Activated CD4-positive, alpha-beta T cell treated with anti-CD3 and anti-CD28 coated beads for 36 hours (primary cell): ENCODE measurements at regions of chr1 and their contacts with region 1.

Region 1: GRCh38 chr1:67227196-67227595 is 60.9 kb downstream of the IL23R start:
- DNase-seq: no peak
- ATAC-seq: no peak
- H3K4me3 Mint-ChIP-seq: no peak overlapping the region
- H3K27ac Mint-ChIP-seq: no peak overlapping the region
- H3K4me1 Mint-ChIP-seq: peaks cover 11% of the 10 kb centered on the region
- H3K27me3 Mint-ChIP-seq: no peaks in the 10 kb centered on the region

Region 2: DNA sequence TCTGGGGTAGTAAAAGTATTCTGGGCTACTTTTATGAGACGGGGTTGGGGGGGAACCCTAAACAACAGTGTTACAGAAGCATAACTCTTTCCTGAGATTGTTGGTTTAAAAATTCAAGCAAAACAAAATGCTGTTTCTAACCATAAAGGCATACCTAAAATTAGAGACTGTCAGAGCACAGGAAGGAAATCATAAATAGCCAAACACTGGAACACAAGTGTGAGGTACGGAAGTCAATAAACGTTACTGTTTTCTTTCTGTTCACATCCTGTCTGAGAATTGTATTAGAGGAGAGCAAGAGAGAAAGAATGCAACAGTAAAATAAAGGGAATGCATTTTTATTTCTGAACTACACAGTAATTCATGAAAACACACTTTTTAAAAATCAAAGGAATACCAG is 37.7 kb after region 1 on chr1:
- CTCF ChIA-PET with region 1: no interaction called
- POLR2A ChIA-PET with region 1: no interaction called
- intact Hi-C with region 1: no loop called
- DNase-seq: no peak
- ATAC-seq: peak; percentile 30
- H3K4me3 Mint-ChIP-seq: no peak overlapping the region
- H3K27ac Mint-ChIP-seq: no peak overlapping the region
- H3K4me1 Mint-ChIP-seq: peaks cover 26% of the 10 kb centered on the region
- H3K27me3 Mint-ChIP-seq: peaks cover 2% of the 10 kb centered on the region

Region 3: DNA sequence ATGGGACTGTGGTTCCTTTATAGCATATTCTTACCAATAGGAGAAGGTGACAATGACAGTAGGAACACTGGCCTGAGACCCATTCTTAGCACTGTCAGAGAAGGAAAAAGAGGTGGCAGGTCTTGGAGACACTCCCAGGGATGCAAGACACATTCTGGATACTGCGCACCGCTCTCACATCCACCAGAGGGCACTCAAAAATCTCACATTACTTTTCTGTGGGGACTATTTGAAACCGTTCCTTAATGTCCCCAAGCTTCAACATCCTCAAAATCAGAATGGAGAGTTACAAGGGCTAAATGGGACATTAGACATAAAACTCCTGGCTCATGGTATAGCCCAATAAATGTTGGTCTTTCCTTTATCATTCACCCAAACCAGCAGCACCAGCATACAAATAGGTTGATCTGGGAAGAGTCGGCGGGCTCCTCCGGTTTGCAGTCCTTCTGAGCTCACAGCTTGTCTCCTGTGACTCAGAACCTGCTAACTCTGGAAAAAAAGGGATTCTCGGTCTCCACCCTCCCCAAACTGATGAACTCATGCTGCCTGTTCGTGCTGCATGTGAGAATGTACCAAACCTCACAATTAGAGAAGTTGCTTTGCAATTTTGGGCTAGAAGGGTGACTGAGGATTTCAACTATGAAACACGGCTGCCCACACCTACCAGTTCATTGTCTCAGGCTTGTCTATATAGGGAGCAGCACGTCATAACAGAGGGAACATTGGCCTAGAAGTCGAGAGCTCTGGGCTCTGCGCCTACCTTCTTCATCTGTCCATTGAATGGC is 120.7 kb after region 1 on chr1:
- CTCF ChIA-PET with region 1: no interaction called
- POLR2A ChIA-PET with region 1: no interaction called
- intact Hi-C with region 1: loop called in 1 of 2 experiments (anchors 10 kb)
- DNase-seq: peak; percentile 42
- ATAC-seq: no peak
- H3K4me3 Mint-ChIP-seq: no peak overlapping the region
- H3K27ac Mint-ChIP-seq: no peak overlapping the region
- H3K4me1 Mint-ChIP-seq: peaks cover 38% of the 10 kb centered on the region
- H3K27me3 Mint-ChIP-seq: no peaks in the 10 kb centered on the region

Region 4: GRCh38 chr1:67404212-67404620 is 177.0 kb after region 1 on chr1:
- CTCF ChIA-PET with region 1: no interaction called
- POLR2A ChIA-PET with region 1: no interaction called
- intact Hi-C with region 1: loop called in 1 of 2 experiments (anchors 5 kb)
- DNase-seq: no peak
- ATAC-seq: no peak
- H3K4me3 Mint-ChIP-seq: no peak overlapping the region
- H3K27ac Mint-ChIP-seq: no peak overlapping the region
- H3K4me1 Mint-ChIP-seq: peaks cover 19% of the 10 kb centered on the region
- H3K27me3 Mint-ChIP-seq: no peaks in the 10 kb centered on the region